ENCODE measurements at regions of chr1 and their contacts with region 1.

Region 1: GRCh38 chr1:45490626-45491486 is at the start of gene TESK2:
- DNase-seq: peak; percentile 98
- H3K4me3 ChIP-seq: peak within 1 kb of the TSS; percentile 74
- H3K27me3 ChIP-seq: no peaks in the 10 kb centered on the region
- CTCF ChIP-seq: peak; percentile 9; the same call in 1 of the 2 replicates
- polyA plus RNA-seq, gene TESK2: 2.4 and 2.5 TPM in 2 replicates

Region 2: DNA sequence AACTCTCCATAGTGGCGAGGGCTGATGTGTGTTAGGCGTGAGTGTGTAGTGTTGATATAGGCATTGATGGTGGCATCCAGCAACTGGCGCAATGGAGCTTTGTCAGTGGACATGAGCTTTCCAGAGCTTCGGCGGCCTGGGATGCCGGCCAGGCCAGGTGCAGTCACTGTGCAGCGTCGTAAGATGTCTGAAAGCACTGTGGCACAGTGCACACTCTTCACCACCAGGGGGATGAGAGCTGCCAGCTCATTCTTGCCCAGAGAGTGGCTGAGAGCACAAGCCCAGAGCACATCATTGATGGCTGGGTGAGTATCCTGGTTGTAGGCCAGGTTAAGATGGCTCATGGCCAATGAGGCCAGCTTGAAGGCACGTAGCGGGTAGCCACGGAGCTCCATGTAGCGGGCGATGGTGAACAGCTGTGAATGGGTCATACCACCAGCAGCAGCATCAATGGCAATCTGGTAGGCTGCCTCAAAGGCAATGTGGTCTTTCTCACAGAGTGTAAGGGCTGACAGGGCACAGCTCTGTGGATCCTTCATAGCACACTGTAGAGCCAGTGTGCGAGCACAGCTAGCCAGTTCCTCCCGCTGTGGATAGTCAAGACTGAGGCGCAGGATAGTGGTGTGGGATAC is 472.1 kb before region 1 on chr1:
- CTCF ChIA-PET with region 1: interaction called, 80 read pairs
- POLR2A ChIA-PET with region 1: no interaction called
- DNase-seq: no peak
- H3K4me3 ChIP-seq: no peak overlapping the region
- H3K27me3 ChIP-seq: no peaks in the 10 kb centered on the region
- CTCF ChIP-seq: peak; percentile 88

Region 3: DNA sequence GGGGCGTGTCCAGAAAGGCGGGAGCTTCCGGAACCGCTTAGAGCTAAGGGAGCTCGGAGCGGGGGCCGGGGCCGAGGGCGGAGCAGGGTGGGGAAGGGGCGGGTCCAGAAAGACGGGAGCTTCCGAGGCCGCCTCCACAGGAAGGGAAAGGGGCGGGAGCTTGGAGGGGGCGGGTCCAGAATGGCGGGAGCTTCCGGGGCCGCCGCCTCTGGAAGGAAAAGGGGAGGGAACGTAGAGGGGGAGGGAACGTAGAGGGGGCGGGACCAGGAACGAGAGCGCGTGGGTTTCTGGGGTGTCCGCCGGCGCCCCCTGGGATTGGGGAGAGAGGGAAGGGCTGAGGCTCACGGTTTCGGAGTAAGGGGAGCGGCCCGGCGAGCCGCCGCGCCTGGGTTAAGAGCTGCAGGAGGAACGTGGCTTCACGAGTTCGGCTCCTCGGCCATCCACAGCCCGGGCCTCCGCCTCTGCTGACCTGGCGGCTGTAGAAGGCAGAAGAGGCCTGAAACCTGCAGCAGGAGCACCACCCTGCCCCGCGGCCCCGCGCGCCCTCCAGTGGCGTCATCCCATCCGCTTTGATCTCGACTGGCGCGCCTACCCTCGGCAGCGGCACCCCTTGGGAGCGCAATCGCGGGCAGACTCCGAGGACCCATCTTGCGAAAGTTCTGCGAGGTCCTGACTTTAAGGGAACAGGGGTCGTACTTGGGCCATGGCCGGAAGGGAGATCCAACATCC is 187.1 kb before region 1 on chr1:
- CTCF ChIA-PET with region 1: interaction called, 22 read pairs
- POLR2A ChIA-PET with region 1: no interaction called
- DNase-seq: peak; percentile 90
- H3K4me3 ChIP-seq: peak overlapping the region; percentile 70
- H3K27me3 ChIP-seq: no peaks in the 10 kb centered on the region
- CTCF ChIP-seq: peak; percentile 73

Region 4: GRCh38 chr1:45359882-45360513 is 130.9 kb before region 1 on chr1:
- CTCF ChIA-PET with region 1: interaction called, 173 read pairs
- POLR2A ChIA-PET with region 1: no interaction called
- DNase-seq: no peak
- H3K4me3 ChIP-seq: no peak overlapping the region
- H3K27me3 ChIP-seq: no peaks in the 10 kb centered on the region
- CTCF ChIP-seq: peak; percentile 70

Measured in BJ (cell line).